Activated CD8-positive, alpha-beta T cell treated with anti-CD3 and anti-CD28 coated beads, Interleukin-2, amount 10 ng/mL, durations not matched to agents 7 days and 5 days (primary cell): ENCODE measurements at regions of chr1 and their contacts with region 1.

Region 1: DNA sequence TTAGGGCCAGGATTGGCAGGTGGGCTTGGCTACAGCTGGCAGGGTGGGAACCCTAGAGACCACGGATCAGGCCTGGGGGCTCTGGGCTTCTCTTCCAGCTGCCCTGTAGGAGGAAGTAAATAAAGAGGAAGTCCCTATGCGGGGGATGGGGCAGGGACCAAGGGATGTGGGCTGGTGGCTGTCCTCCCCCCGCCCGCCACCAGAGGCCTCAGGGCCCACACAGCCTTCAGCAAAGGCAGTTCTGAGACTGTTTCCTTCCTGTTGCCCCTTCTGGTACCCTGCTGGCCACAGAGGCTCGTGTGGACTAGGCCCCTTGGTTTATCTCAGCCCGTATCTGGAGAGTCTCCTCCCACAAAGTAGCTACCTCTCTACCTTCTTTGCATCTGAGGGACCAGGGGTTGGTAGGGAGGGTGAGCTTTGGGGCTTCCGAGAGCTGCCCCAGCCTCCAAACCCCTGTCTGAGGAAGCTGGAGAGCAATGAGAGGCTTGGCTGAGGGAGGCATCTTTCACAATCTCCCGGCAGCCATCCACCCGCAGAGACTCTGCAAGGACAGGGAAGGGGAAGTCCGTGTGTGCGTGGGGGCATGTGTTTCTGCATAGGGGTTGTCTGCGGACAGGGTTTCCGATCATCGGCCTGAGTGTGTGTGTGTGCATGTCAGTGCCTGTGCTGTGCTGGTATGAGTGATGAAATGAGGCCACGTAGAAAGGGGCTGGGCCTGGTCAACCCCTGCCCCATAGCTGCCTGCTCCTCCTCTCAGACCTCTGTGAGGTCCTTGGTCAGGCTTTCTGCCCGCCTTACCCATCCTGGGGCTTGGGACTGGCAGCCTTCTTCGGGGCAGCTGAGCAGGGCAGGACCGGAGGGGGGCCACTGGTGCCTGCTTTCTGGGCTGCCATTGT is 12.5 kb downstream of the RPS6KA1 start:
- DNase-seq: peak; percentile 92
- ATAC-seq: peak; percentile 74
- H3K4me3 Mint-ChIP-seq: peak overlapping the region; percentile 85
- H3K27ac Mint-ChIP-seq: peak overlapping the region; percentile 99
- H3K4me1 Mint-ChIP-seq: peaks cover 93% of the 10 kb centered on the region
- H3K27me3 Mint-ChIP-seq: no peaks in the 10 kb centered on the region

Region 2: GRCh38 chr1:26500488-26501175 is 41.4 kb before region 1 on chr1:
- CTCF ChIA-PET with region 1: interaction called, 92 read pairs
- POLR2A ChIA-PET with region 1: interaction called, 23 read pairs
- DNase-seq: peak; percentile 92
- ATAC-seq: peak; percentile 77
- H3K4me3 Mint-ChIP-seq: peak overlapping the region; percentile 86
- H3K27ac Mint-ChIP-seq: peak overlapping the region; percentile 97
- H3K4me1 Mint-ChIP-seq: peaks cover 32% of the 10 kb centered on the region
- H3K27me3 Mint-ChIP-seq: no peaks in the 10 kb centered on the region

Region 3: GRCh38 chr1:26516987-26517765 is 24.9 kb before region 1 on chr1:
- CTCF ChIA-PET with region 1: interaction called, 13 read pairs
- POLR2A ChIA-PET with region 1: no interaction called
- DNase-seq: no peak
- ATAC-seq: no peak
- H3K4me3 Mint-ChIP-seq: no peak overlapping the region
- H3K27ac Mint-ChIP-seq: no peak overlapping the region
- H3K4me1 Mint-ChIP-seq: no peaks in the 10 kb centered on the region
- H3K27me3 Mint-ChIP-seq: peaks cover 6% of the 10 kb centered on the region

Region 4: GRCh38 chr1:26524181-26524580 is 17.9 kb before region 1 on chr1:
- CTCF ChIA-PET with region 1: interaction called, 70 read pairs
- POLR2A ChIA-PET with region 1: interaction called, 4 read pairs
- DNase-seq: no peak
- ATAC-seq: no peak
- H3K4me3 Mint-ChIP-seq: no peak overlapping the region
- H3K27ac Mint-ChIP-seq: no peak overlapping the region
- H3K4me1 Mint-ChIP-seq: peaks cover 5% of the 10 kb centered on the region
- H3K27me3 Mint-ChIP-seq: peaks cover 12% of the 10 kb centered on the region

Region 5: GRCh38 chr1:26529655-26530409 is 12.2 kb before region 1 on chr1 and contains the start of gene RPS6KA1:
- CTCF ChIA-PET with region 1: interaction called, 70 read pairs
- POLR2A ChIA-PET with region 1: interaction called, 7 read pairs
- DNase-seq: peak; percentile 66
- ATAC-seq: peak; percentile 92
- H3K4me3 Mint-ChIP-seq: peak within 1 kb of the TSS; percentile 85
- H3K27ac Mint-ChIP-seq: peak within 1 kb of the TSS; percentile 89
- H3K4me1 Mint-ChIP-seq: peaks cover 39% of the 10 kb centered on the region
- H3K27me3 Mint-ChIP-seq: peaks cover 3% of the 10 kb centered on the region
- total RNA-seq, gene RPS6KA1: 179 to 193 TPM

Region 6: DNA sequence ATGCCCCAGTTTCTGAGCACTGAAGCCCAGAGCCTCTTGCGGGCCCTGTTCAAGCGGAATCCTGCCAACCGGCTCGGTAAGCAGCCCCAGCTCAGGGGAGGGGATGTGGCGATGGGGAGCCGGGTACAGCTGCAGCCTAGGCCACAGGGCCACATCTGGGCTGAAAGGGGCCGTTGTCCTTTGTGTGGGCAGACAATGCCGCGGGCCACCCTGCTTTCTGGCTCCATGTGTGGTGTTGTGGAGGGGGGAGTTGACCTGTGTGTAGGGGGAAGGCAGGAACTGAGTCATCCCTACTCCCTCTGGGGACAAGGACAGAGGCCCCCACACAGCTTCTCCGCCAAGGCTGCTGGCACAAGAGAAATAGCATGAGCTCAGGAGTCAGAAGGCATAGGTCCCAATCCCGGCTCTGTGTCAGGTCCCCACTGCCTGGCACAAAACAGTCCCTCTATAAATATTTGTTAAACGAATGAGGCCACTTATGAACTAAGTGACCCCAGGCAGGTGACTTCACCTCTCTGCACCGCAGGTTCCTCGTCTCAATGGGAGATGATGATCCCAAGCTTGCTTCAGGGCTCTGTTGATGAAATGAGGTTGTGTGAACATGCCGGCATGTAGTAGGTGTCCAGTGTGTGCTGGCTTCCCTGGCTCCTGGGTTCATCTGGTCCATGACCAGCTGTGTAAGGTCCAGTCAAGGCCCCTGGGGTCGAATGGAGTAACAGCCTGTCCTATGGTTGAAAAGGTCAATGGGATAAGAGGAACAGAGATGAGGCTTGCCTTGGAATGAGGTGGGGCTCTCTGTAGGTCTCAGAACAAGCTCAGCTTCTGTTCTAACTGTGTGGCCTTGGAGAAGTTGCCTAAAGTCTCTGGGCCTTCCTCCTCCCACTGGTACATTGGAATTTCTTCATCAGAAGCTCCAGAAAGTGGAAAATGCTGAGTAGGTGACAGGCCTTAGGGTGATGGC is 13.8 kb after region 1 on chr1:
- CTCF ChIA-PET with region 1: interaction called, 67 read pairs
- POLR2A ChIA-PET with region 1: interaction called, 4 read pairs
- DNase-seq: no peak
- ATAC-seq: no peak
- H3K4me3 Mint-ChIP-seq: no peak overlapping the region
- H3K27ac Mint-ChIP-seq: peak overlapping the region; percentile 36
- H3K4me1 Mint-ChIP-seq: peaks cover 30% of the 10 kb centered on the region
- H3K27me3 Mint-ChIP-seq: no peaks in the 10 kb centered on the region

Region 7: DNA sequence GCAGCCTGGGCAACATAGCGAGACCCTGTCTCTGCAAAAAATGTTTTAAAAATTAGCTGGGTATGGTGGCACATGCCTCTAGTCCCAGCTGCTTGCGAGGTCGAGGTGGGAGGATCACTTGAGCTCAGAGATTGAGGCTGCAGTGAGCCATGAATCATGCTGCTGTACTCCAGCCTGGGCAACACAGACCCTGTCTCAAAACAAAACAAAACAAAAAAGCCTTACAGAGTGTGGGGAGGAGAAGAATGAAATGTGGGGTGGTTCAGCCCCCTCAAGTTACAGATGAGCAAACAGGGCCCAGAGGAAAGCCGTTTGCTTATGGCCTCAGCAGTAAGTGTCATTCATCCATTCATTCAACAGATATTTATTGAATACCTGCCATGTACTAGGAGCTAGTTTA is 28.2 kb after region 1 on chr1:
- CTCF ChIA-PET with region 1: interaction called, 18 read pairs
- POLR2A ChIA-PET with region 1: no interaction called
- DNase-seq: no peak
- ATAC-seq: no peak
- H3K4me3 Mint-ChIP-seq: no peak overlapping the region
- H3K27ac Mint-ChIP-seq: peak overlapping the region; percentile 48
- H3K4me1 Mint-ChIP-seq: peaks cover 17% of the 10 kb centered on the region
- H3K27me3 Mint-ChIP-seq: no peaks in the 10 kb centered on the region

Region 8: GRCh38 chr1:26717017-26717491 is 175.0 kb after region 1 on chr1:
- CTCF ChIA-PET with region 1: no interaction called
- POLR2A ChIA-PET with region 1: no interaction called
- DNase-seq: no peak
- ATAC-seq: no peak
- H3K4me3 Mint-ChIP-seq: no peak overlapping the region
- H3K27ac Mint-ChIP-seq: no peak overlapping the region
- H3K4me1 Mint-ChIP-seq: peaks cover 84% of the 10 kb centered on the region
- H3K27me3 Mint-ChIP-seq: no peaks in the 10 kb centered on the region